ENCODE measurements at regions of chr17 and their contacts with region 1.

Region 1: GRCh38 chr17:79991140-79991923 is 44.3 kb downstream of the TBC1D16 start:
- DNase-seq: peak; percentile 87 to 92 (median 89)
- H3K4me3 ChIP-seq: peak overlapping the region; percentile 31
- H3K27ac ChIP-seq: peak overlapping the region; percentile 67 to 72
- H3K4me1 ChIP-seq: peaks cover 53% of the 10 kb centered on the region
- H3K27me3 ChIP-seq: no peaks in the 10 kb centered on the region
- CTCF ChIP-seq: peak in 1 of 3 donors; percentile 56
- EP300 ChIP-seq: no peak
- POLR2A ChIP-seq: no peak

Region 2: GRCh38 chr17:79741751-79742588 is 249.4 kb before region 1 on chr17:
- intact Hi-C with region 1: loop called in 1 of 4 experiments (anchors 2 kb)
- DNase-seq: peak; percentile 56 to 82 (median 69)
- H3K4me3 ChIP-seq: no peak overlapping the region
- H3K27ac ChIP-seq: no peak overlapping the region
- H3K4me1 ChIP-seq: peaks cover 3% of the 10 kb centered on the region
- H3K27me3 ChIP-seq: no peaks in the 10 kb centered on the region
- CTCF ChIP-seq: peak; percentile 72 to 85 (median 79)
- EP300 ChIP-seq: no peak
- POLR2A ChIP-seq: no peak

Region 3: GRCh38 chr17:79789534-79790353 is 201.6 kb before region 1 on chr17:
- intact Hi-C with region 1: loop called in 3 of 4 experiments (anchors 2 to 5 kb)
- DNase-seq: peak in 4 of 5 donors; percentile 59 to 75 (median 66)
- H3K4me3 ChIP-seq: no peak overlapping the region
- H3K27ac ChIP-seq: no peak overlapping the region
- H3K4me1 ChIP-seq: peaks cover 6% of the 10 kb centered on the region
- H3K27me3 ChIP-seq: peaks cover 15% of the 10 kb centered on the region
- CTCF ChIP-seq: peak; percentile 45 to 75 (median 65)
- EP300 ChIP-seq: no peak
- POLR2A ChIP-seq: no peak

Region 4: GRCh38 chr17:79839363-79840268 is 151.7 kb before region 1 on chr17 and contains the start of gene CBX4:
- intact Hi-C with region 1: loop called in 3 of 4 experiments (anchors 2 to 5 kb)
- DNase-seq: peak; percentile 95 to 96 (median 96)
- H3K4me3 ChIP-seq: peak within 1 kb of the TSS; percentile 63
- H3K27ac ChIP-seq: peak within 1 kb of the TSS; percentile 87 to 92
- H3K4me1 ChIP-seq: peaks cover 24% of the 10 kb centered on the region
- H3K27me3 ChIP-seq: no peaks in the 10 kb centered on the region
- CTCF ChIP-seq: peak; percentile 62 to 86 (median 74)
- EP300 ChIP-seq: no peak
- POLR2A ChIP-seq: peak; percentile 49
- total RNA-seq, gene CBX4: 5.5 to 27.9 (median 16.5) TPM

Region 5: DNA sequence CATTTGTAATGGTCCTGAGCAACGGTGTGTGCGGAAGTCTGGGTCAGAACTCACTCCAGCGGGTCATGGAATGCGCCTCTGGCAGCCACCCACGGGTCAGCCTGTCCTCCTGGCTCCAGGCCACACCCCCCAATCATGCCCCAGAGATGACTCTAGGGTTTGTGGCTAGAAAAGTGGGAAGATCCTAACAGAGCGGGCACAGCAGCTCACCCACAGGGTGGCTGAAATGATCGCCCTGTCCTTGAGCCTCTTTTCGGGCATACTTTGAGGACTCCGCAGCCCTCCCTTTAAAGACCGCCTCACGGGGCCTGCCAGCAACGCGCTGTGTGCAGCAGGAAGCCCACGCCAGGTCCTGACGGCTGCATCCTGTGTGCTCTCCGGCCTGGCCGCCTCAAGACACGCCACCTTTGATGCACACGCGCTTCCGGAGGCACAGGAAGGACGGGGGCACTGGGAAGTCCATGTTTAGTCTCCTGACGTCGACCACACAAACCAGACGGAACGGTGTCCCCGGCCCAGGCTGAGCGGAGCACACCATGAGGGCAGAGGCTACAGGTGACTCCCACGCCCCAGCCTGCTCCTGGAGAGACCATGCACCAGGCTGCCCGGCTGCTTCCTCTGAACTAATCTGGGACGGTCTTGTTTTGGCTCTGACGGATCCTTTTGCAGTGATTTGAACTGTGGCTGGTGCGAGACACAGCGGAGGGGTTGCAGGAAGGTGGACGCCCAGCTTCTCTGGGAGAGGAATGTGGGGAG is 48.6 kb before region 1 on chr17:
- intact Hi-C with region 1: loop called in 2 of 4 experiments (anchors 5 kb)
- DNase-seq: peak; percentile 67 to 92 (median 76)
- H3K4me3 ChIP-seq: no peak overlapping the region
- H3K27ac ChIP-seq: no peak overlapping the region
- H3K4me1 ChIP-seq: peaks cover 14% of the 10 kb centered on the region
- H3K27me3 ChIP-seq: no peaks in the 10 kb centered on the region
- CTCF ChIP-seq: no peak
- EP300 ChIP-seq: no peak
- POLR2A ChIP-seq: no peak

Measured in ovary (tissue), 10 donors.